ENCODE measurements at regions of chr12 and their contacts with region 1.

Region 1: DNA sequence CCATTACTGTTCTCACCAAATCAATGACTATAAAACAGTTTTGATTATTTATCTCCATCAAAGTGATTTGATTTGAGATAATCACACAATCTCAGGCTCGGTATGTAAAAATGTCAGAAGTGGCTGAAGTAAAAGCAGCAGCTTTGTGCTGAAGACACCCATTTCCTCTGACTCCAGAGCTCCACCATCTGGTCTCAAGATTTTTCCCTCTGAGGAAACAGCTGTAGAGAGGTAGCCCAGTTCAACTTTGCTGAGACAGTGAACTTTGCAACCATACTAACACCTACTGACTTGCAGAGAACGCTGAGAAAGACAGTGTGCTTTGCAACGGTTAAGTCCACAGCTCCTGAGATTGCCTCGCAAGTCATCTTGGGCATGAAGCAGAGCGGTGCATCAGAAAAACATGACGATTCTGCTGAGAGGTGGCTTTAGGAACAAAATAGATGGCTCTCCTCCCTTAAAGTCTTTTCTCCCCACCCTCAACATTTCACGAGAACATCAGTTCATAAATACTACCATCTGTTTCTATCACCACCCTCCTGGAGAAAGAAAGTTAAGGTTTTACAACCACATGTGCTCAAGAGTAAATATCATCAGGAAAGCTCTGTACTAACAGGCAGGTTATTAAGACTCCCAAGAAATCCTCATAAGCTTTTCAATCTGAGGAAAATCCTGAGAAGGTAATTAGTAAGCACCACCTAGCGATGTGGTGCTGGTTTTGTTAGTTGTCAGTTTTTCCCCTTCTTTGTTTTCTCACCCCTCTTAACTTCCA is 34.8 kb downstream of the HIGD1C start:
- DNase-seq: peak; percentile 47 to 51
- ATAC-seq: peak; percentile 94

Region 2: GRCh38 chr12:50763639-50764285 is 223.4 kb before region 1 on chr12 and contains the start of gene ATF1:
- intact Hi-C with region 1: loop called in 1 of 2 experiments (anchors 5 kb)
- DNase-seq: peak; percentile 91 to 92
- ATAC-seq: peak; percentile 83
- total RNA-seq, gene ATF1: 35.8 to 36.4 TPM

Region 3: DNA sequence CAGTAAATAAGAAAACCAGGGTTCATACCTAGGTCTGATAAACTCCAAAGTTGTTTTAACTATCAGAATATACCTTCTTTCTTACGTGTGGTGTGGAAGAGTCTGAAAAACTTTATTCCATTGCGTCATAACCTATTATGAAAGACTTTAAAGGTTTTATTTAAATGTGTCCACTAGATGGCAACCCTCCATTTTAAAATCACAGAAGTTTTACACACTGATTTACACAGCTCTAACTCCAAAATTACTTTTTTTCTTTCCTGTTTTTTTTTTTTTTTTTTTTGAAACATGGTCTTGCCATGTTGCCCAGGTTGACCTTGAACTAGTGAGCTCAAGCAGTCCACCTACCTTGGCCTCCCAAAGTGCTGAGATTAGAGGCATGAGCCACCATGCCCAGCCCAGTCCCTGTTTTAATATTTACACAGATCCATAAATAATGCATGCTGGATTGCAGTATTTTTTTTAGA is 161.7 kb before region 1 on chr12:
- intact Hi-C with region 1: loop called in 1 of 2 experiments (anchors 2 kb)
- DNase-seq: no peak
- ATAC-seq: peak; percentile 89

Region 4: DNA sequence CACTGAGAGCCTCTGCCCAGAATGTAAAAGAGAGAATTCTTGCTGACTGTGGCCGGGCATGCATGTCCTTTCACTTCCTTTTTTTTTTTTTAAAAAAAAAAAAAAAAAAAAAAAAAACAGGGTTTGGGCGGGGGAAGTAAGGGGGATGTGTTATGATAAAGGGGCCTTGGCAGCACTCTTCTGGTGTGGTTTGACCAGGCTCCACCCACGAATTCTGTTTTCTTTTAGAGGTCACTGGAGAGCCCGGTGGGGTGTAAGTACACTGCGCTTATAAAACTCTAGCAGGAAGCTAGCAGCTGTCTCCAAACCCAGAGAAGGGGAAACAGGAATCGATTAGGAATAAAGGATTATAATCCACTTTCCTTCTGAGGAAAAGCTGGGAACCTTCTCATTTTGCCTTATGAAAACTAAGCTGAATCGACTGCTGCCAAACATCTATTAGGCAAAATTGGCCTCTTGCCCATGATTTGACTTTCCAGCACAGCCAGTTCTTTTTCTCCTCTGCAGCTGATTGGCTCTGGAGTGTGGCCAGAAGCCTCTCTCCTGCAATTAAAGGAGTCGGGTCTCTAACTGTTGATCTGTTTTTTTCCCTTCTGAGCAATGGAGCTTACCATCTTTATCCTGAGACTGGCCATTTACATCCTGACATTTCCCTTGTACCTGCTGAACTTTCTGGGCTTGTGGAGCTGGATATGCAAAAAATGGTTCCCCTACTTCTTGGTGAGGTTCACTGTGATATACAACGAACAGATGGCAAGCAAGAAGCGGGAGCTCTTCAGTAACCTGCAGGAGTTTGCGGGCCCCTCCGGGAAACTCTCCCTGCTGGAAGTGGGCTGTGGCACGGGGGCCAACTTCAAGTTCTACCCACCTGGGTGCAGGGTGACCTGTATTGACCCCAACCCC is 62.5 kb before region 1 on chr12:
- intact Hi-C with region 1: loop called in 1 of 2 experiments (anchors 5 kb)
- DNase-seq: peak; percentile 88 to 95
- ATAC-seq: peak; percentile 77